PC-9 (cell line): ENCODE measurements at regions of chr3 and their contacts with region 1.

Region 1: GRCh38 chr3:150469031-150469942 is 61.2 kb downstream of the TSC22D2 start:
- DNase-seq: peak; percentile 76 to 97
- H3K4me3 ChIP-seq: peak overlapping the region; percentile 38; the same call in 1 of the 2 replicates
- H3K27ac ChIP-seq: peak overlapping the region; percentile 89
- H3K4me1 ChIP-seq: peaks cover 53% of the 10 kb centered on the region
- H3K27me3 ChIP-seq: no peaks in the 10 kb centered on the region
- CTCF ChIP-seq: no peak

Region 2: DNA sequence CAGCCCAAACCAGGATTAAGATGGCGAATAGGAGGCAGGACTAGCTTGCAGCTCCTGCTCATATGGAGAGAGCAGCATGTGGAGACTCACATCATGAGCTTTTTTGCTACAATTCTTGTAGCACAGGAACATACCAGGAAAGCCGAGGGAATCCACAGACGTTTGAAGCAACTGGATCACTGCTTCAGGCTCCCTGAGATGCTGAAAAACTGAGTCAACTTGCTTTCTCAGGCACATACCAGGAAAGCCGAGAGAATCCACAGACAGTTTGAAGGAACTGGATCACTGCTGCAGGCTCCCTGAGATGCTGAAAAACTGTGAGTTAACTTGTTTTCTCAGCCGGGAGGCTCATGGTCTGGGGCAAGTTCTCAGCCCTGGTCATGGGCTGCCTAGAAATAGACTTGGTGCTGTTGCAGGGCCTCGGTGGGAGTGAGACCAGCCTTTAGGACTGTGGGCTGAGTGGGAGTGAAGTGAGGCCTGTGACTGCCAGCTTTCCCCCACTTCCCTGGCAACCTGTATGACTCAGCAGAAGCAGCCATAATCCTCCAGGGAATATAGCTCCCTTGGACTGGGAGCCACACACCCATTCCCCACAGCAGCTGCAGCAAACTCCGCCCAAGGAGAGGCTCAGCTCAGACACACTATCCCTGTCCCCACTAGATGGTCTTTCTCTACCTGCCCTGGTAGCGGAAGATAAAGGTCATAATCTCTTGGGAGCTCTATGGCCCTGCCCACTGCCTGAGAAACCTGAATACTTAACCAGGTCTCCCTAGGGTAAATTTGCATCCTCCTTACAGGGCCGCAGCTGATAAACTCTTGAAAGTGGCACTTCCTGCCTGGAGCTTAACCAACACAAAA is 446.7 kb before region 1 on chr3:
- CTCF ChIA-PET with region 1: no interaction called
- POLR2A ChIA-PET with region 1: no interaction called
- intact Hi-C with region 1: no loop called
- DNase-seq: no peak
- H3K4me3 ChIP-seq: no peak overlapping the region
- H3K27ac ChIP-seq: no peak overlapping the region
- H3K4me1 ChIP-seq: no peaks in the 10 kb centered on the region
- H3K27me3 ChIP-seq: no peaks in the 10 kb centered on the region
- CTCF ChIP-seq: no peak

Region 3: GRCh38 chr3:150248116-150248887 is 221.0 kb before region 1 on chr3:
- CTCF ChIA-PET with region 1: no interaction called
- POLR2A ChIA-PET with region 1: interaction called, 14 read pairs
- intact Hi-C with region 1: no loop called
- DNase-seq: peak in 1 of 2 experiments; percentile 25
- H3K4me3 ChIP-seq: no peak overlapping the region
- H3K27ac ChIP-seq: no peak overlapping the region
- H3K4me1 ChIP-seq: peaks cover 12% of the 10 kb centered on the region
- H3K27me3 ChIP-seq: no peaks in the 10 kb centered on the region
- CTCF ChIP-seq: no peak

Region 4: GRCh38 chr3:150286390-150287147 is 182.7 kb before region 1 on chr3:
- CTCF ChIA-PET with region 1: no interaction called
- POLR2A ChIA-PET with region 1: no interaction called
- intact Hi-C with region 1: loop called (anchors 1 kb)
- DNase-seq: peak; percentile 25 to 42
- H3K4me3 ChIP-seq: no peak overlapping the region
- H3K27ac ChIP-seq: peak overlapping the region; percentile 4; the same call in 1 of the 2 replicates
- H3K4me1 ChIP-seq: peaks cover 11% of the 10 kb centered on the region; the same call in 1 of the 2 replicates
- H3K27me3 ChIP-seq: no peaks in the 10 kb centered on the region
- CTCF ChIP-seq: peak; percentile 79

Region 5: DNA sequence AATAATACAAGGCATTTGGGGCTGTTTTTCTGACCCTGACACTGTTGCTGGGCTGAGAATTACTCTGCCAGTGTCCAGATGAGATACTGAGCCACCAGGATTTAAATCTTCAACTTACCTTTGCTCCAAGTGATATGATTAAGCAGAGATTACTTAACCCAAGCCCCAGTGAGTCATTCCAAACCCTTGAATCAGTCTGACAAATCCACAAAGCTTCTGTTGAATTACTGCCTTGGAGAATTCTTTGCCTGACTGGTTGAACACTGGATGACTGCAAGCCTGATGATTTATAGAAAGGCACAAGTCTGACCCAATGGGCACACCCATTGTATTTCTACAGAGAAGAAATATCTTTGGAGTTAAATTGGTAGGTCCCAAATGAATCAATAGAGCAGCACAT is 149.4 kb before region 1 on chr3:
- CTCF ChIA-PET with region 1: no interaction called
- POLR2A ChIA-PET with region 1: no interaction called
- intact Hi-C with region 1: loop called (anchors 2 kb)
- DNase-seq: peak; percentile 58 to 98
- H3K4me3 ChIP-seq: peak overlapping the region; percentile 17; the same call in 1 of the 2 replicates
- H3K27ac ChIP-seq: peak overlapping the region; percentile 58
- H3K4me1 ChIP-seq: peaks cover 75% of the 10 kb centered on the region
- H3K27me3 ChIP-seq: no peaks in the 10 kb centered on the region
- CTCF ChIP-seq: no peak

Region 6: GRCh38 chr3:150371741-150372254 is 97.5 kb before region 1 on chr3:
- CTCF ChIA-PET with region 1: no interaction called
- POLR2A ChIA-PET with region 1: interaction called, 7 read pairs
- intact Hi-C with region 1: loop called (anchors 1 kb)
- DNase-seq: peak; percentile 77 to 99
- H3K4me3 ChIP-seq: peak overlapping the region; percentile 53; the same call in 1 of the 2 replicates
- H3K27ac ChIP-seq: peak overlapping the region; percentile 92
- H3K4me1 ChIP-seq: peaks cover 63% of the 10 kb centered on the region
- H3K27me3 ChIP-seq: no peaks in the 10 kb centered on the region
- CTCF ChIP-seq: no peak

Region 7: DNA sequence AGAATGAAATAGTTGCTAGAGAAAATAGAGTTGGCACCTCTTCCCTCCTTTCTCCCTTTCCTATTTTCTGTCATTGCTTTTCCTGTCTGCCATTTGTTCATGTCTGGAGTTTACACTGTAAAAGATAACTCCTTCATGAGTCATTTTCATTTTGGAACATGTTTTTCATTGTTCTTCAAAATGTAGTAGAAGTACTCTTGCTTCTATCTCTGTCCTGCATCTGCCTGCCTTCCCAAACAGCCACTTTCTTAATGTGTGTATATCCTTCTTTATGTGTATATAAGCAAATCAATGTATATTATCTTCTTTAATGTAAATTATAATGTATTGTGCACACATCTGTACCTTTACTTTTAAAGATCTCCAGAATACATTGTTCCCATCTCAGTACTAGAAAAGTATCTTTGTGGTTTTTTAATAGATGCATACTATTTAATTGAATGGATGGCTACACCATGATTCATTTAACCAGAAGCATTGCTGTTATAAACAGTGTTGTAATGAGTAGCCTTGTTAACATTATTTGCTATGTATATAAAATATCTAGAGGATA is 20.0 kb before region 1 on chr3:
- CTCF ChIA-PET with region 1: no interaction called
- POLR2A ChIA-PET with region 1: interaction called, 6 read pairs
- intact Hi-C with region 1: loop called (anchors 1 kb)
- DNase-seq: peak in 1 of 2 experiments; percentile 60
- H3K4me3 ChIP-seq: no peak overlapping the region
- H3K27ac ChIP-seq: 0 out of 2 replicates have a peak overlapping the region, but pooled peaks have one; percentile 25
- H3K4me1 ChIP-seq: peaks cover 52% of the 10 kb centered on the region
- H3K27me3 ChIP-seq: no peaks in the 10 kb centered on the region
- CTCF ChIP-seq: no peak

Region 8: DNA sequence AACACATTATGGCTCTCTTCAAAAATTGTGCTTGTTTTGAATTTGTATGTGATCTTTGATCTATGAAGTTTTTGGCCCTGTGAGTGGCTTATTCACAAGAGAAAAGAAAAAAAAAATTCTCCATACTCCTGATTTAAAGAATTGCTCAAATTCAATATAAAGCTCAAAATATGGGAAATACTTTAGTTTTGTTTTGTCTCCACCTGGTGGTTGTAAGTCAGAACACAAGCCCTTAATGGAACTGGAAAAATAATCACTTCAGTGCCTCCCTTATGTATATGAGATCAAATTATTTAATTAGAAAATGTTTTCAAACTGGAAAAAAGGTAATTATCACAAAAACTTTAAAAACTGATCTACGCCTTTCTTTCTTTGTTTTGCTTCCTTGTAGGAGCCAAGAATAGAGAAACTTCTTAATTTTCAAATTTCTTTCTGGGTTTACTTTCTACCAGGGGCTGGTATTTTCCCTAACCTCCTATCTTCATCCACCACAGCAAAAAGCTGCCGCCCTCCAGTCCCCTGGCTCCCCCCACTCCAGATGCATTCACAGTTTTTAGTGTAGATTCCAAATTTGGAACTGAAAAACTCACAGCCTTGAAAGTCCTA is 26.4 kb after region 1 on chr3:
- CTCF ChIA-PET with region 1: no interaction called
- POLR2A ChIA-PET with region 1: interaction called, 3 read pairs
- intact Hi-C with region 1: loop called (anchors 2 kb)
- DNase-seq: no peak
- H3K4me3 ChIP-seq: no peak overlapping the region
- H3K27ac ChIP-seq: no peak overlapping the region
- H3K4me1 ChIP-seq: peaks cover 28% of the 10 kb centered on the region
- H3K27me3 ChIP-seq: no peaks in the 10 kb centered on the region
- CTCF ChIP-seq: peak; percentile 82

Region 9: GRCh38 chr3:152193673-152194267 is 1724.5 kb after region 1 on chr3:
- CTCF ChIA-PET with region 1: no interaction called
- POLR2A ChIA-PET with region 1: no interaction called
- intact Hi-C with region 1: no loop called
- DNase-seq: no peak
- H3K4me3 ChIP-seq: no peak overlapping the region
- H3K27ac ChIP-seq: no peak overlapping the region
- H3K4me1 ChIP-seq: no peaks in the 10 kb centered on the region
- H3K27me3 ChIP-seq: no peaks in the 10 kb centered on the region
- CTCF ChIP-seq: no peak